Pancreas (tissue), 10 donors: ENCODE measurements at regions of chrX and their contacts with region 1.

Region 1: GRCh38 chrX:39519030-39519488 is 578.7 kb downstream of the BCOR start:
- DNase-seq: peak in 5 of 6 donors; percentile 29 to 71 (median 34)
- ATAC-seq: peak; percentile 74 to 91 (median 81)
- H3K4me3 ChIP-seq: peak overlapping the region in 1 of 4 donors; percentile 19
- H3K27ac ChIP-seq: no peak overlapping the region
- H3K4me1 ChIP-seq: no peaks in the 10 kb centered on the region
- H3K27me3 ChIP-seq: peaks cover 0 to 9% (median 0%) of the 10 kb centered on the region in 4 donors
- CTCF ChIP-seq: no peak

Region 2: DNA sequence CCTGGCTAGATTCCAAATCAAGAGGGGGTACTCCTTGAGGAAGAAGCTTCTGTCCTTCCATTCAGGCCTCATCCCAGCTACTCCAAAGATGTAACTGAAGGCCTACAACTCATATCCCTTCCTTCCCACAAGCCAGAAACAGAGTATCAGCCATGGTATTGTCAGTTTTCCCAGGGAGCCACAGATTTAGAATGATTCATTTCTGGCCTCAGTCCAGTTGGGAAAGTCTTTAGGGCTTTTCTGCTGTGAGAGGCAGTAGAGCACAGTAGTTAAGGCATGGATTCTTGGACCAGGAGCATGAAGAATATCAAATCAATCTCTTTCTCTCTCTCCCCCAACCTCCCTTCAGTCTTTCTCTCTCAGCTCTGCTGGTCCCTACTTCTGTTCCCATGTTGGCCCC is 73.7 kb after region 1 on chrX:
- intact Hi-C with region 1: no loop called
- DNase-seq: no peak
- ATAC-seq: peak in 1 of 4 donors; percentile 17
- H3K4me3 ChIP-seq: no peak overlapping the region
- H3K27ac ChIP-seq: no peak overlapping the region
- H3K4me1 ChIP-seq: no peaks in the 10 kb centered on the region
- H3K27me3 ChIP-seq: peaks cover 0 to 16% (median 2%) of the 10 kb centered on the region in 4 donors
- CTCF ChIP-seq: no peak

Region 3: GRCh38 chrX:40188573-40189432 is 669.7 kb after region 1 on chrX:
- intact Hi-C with region 1: loop called in 1 of 3 experiments (anchors 10 kb)
- DNase-seq: no peak
- ATAC-seq: no peak
- H3K4me3 ChIP-seq: no peak overlapping the region
- H3K27ac ChIP-seq: no peak overlapping the region
- H3K4me1 ChIP-seq: no peaks in the 10 kb centered on the region
- H3K27me3 ChIP-seq: peaks cover 0 to 7% (median 2%) of the 10 kb centered on the region in 4 donors
- CTCF ChIP-seq: no peak